ENCODE measurements at regions of chr5 and their contacts with region 1.

Region 1: DNA sequence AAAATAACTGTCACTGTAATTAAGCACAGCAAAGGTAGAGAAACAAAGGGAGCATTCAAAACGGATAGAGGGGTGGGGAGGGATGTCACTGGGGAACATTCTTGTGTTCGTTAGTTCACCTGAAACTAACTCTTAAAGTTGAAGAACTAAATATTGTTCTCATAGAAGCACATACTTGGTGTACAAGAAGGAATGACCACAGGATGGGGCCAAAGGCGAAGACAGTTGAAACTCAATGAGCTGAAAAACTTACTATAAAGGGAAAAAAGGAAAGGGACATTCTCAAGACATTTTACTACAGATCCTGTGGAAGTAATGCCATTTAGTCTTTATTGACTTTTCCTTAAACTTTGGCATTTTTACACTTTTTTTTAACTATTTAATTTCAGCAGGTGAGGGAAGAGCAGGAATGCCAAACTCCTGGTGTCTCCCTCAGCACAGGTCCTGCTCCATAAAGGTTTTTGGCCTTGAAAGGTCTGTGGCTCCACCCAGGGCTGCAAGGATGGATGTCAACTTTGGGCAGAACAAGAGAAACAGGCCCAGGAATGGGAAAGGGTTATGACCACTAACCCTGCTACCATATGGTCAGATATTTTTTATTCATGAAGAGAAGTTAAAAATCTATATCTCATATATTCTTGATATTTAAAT is 197.6 kb upstream of the RASA1 start:
- DNase-seq: peak in 1 of 2 donors; percentile 68
- H3K4me3 ChIP-seq: no peak overlapping the region
- H3K27ac ChIP-seq: no peak overlapping the region
- H3K4me1 ChIP-seq: no peaks in the 10 kb centered on the region
- H3K27me3 ChIP-seq: no peaks in the 10 kb centered on the region
- CTCF ChIP-seq: peak; percentile 38 to 73 (median 61)

Region 2: GRCh38 chr5:87147441-87147840 is 77.3 kb after region 1 on chr5:
- intact Hi-C with region 1: loop called (anchors 10 kb)
- DNase-seq: no peak
- H3K4me3 ChIP-seq: no peak overlapping the region
- H3K27ac ChIP-seq: no peak overlapping the region
- H3K4me1 ChIP-seq: no peaks in the 10 kb centered on the region
- H3K27me3 ChIP-seq: no peaks in the 10 kb centered on the region
- CTCF ChIP-seq: no peak

Region 3: DNA sequence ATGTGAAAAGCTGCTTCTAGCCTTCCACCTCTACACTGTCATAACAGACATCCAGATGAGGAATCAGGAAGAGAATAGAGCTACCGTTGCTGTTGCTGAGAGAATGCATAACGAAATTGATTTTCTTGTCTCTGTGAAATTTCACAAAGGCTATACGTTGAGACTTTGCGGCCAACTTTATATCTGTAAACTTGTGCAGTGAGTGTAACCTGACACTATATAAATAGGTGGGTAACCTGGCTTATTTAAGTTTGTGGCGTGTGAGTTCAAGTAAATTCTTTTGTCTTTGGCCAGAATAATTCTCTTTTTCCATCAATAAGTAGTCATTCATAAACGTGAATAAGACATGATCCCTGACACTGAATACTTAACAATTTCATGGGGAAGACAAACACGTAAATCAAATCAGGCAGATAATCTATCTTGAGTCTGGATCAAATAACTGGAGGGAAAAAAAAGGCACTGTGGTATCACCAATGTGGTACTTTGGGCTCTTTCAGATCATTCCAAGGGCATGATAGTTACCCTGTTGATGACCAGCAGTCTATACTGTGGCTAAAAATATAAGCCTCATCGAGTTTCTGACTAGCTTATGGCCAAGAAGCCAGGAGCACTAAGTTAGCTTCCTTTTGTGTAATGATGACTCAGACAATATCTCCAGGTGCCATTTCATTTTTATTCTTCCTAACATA is 99.3 kb after region 1 on chr5:
- intact Hi-C with region 1: no loop called
- DNase-seq: no peak
- H3K4me3 ChIP-seq: no peak overlapping the region
- H3K27ac ChIP-seq: no peak overlapping the region
- H3K4me1 ChIP-seq: no peaks in the 10 kb centered on the region
- H3K27me3 ChIP-seq: no peaks in the 10 kb centered on the region
- CTCF ChIP-seq: no peak

Region 4: DNA sequence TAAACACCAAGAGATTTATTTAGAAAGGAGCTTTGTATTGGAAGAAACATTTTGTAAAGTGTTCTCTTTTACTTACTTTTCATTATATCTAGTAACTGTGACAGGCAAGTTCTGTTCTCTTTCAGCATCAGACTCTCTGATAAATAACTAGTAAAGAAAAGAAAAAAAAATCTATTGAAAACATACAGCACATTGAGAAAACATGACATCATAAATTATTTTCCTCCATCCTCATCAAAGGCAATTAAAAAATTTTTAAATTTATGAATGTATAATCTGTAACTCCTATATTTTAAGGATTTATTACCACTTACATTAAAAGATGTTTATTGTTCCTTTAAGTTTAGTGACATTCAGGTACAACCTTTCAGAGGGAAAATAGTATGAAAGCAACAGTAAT is 331.5 kb after region 1 on chr5:
- intact Hi-C with region 1: loop called (anchors 1 kb)
- DNase-seq: no peak
- H3K4me3 ChIP-seq: no peak overlapping the region
- H3K27ac ChIP-seq: no peak overlapping the region
- H3K4me1 ChIP-seq: peaks cover 0 to 5% of the 10 kb centered on the region in 2 donors
- H3K27me3 ChIP-seq: no peaks in the 10 kb centered on the region
- CTCF ChIP-seq: no peak

Region 5: GRCh38 chr5:87452837-87453236 is 382.7 kb after region 1 on chr5:
- intact Hi-C with region 1: no loop called
- DNase-seq: no peak
- H3K4me3 ChIP-seq: no peak overlapping the region
- H3K27ac ChIP-seq: no peak overlapping the region
- H3K4me1 ChIP-seq: no peaks in the 10 kb centered on the region
- H3K27me3 ChIP-seq: no peaks in the 10 kb centered on the region
- CTCF ChIP-seq: no peak